HCT116 (cell line): ENCODE measurements at regions of chr1 and their contacts with region 1.

Region 1: DNA sequence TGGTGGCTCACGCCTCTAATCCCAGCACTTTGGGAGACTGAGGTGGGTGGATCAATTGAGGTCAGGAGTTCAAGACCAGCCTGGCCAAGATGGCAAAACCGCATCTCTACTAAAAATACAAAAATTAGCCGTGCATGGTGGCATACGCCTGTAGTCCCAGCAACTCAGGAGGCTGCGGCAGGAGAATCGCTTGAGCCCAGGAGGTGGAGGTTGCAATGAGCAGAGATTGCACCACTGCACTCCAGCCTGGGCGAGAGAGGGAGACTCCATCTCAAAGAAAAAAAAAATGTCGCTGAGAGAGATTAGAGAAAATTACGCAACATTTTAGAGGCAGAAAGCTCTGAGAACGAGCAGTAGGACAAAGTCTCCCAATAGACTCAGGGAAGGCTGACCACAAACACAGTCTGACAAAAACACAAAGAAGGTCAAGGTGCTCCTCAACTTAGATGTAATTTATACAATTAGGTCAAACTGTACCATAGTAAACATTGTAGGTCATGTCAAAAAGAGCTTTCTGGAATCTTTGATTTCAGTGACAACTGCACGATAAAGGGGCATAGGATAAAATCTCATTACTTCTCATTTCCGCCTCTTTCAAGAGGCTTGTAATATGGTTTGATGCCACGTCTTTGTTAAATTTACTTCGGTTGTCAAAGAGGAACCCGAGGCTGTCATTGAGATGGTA is 367.6 kb upstream of the ZRANB2 start:
- DNase-seq: no peak
- ATAC-seq: no peak
- H3K4me3 ChIP-seq: no peak overlapping the region
- H3K27ac ChIP-seq: no peak overlapping the region
- H3K4me1 ChIP-seq: no peaks in the 10 kb centered on the region
- H3K27me3 ChIP-seq: no peaks in the 10 kb centered on the region
- CTCF ChIP-seq: no peak
- POLR2A ChIP-seq: no peak
- RAD21 ChIP-seq: no peak

Region 2: GRCh38 chr1:71399594-71399993 is 48.9 kb before region 1 on chr1:
- CTCF ChIA-PET with region 1: no interaction called
- POLR2A ChIA-PET with region 1: no interaction called
- RAD21 ChIA-PET with region 1: no interaction called
- intact Hi-C with region 1: loop called (anchors 5 kb)
- DNase-seq: no peak
- ATAC-seq: no peak
- H3K4me3 ChIP-seq: no peak overlapping the region
- H3K27ac ChIP-seq: no peak overlapping the region
- H3K4me1 ChIP-seq: no peaks in the 10 kb centered on the region
- H3K27me3 ChIP-seq: no peaks in the 10 kb centered on the region
- CTCF ChIP-seq: no peak
- POLR2A ChIP-seq: no peak
- RAD21 ChIP-seq: no peak